WTC11 (cell line): ENCODE measurements at regions of chr3 and their contacts with region 1.

Region 1: DNA sequence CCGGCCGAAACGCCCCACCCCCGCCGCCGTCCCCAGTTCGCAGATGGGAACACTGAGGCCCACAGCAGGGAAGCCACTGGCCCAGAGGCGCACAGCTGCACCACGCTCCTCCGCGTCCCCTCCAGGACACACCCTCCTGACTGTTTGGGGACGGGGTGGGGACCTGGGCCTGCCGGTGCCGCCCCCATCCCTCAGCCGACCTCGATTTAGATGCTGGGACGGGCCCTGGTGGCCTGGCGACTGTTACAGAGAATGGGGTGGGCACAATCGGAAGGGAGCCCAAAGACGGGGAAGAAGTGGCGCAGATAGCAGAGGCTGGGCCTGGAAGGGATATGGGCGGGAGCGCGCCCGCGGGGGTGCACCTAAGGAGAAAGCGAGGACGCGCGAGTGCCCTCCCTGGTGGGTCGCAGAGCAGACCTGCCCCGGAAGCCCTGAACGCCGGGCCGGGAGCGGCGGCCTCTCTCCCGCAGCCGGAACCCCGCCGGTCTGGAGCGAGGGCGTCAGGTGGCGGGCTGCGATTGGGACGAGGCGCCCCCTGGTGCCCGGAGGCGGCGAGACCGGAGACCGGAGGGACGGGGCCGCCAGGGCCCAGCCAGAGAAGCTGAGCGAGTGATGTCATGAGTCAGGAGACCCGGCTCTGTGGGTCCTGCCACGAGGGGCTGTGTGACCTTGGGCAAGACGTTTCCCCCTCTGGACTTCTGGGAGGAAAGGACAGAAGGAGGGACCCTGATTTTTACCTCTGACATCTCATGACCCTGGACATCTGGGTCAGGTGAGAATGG is 78.4 kb downstream of the IQSEC1 start:
- DNase-seq: peak; percentile 90
- ATAC-seq: peak; percentile 71
- H3K4me3 Mint-ChIP-seq: peak overlapping the region; percentile 79
- H3K27ac Mint-ChIP-seq: peak overlapping the region; percentile 79
- H3K4me1 Mint-ChIP-seq: peaks cover 14% of the 10 kb centered on the region
- H3K27me3 Mint-ChIP-seq: peaks cover 6% of the 10 kb centered on the region
- CTCF ChIP-seq: peak; percentile 83

Region 2: DNA sequence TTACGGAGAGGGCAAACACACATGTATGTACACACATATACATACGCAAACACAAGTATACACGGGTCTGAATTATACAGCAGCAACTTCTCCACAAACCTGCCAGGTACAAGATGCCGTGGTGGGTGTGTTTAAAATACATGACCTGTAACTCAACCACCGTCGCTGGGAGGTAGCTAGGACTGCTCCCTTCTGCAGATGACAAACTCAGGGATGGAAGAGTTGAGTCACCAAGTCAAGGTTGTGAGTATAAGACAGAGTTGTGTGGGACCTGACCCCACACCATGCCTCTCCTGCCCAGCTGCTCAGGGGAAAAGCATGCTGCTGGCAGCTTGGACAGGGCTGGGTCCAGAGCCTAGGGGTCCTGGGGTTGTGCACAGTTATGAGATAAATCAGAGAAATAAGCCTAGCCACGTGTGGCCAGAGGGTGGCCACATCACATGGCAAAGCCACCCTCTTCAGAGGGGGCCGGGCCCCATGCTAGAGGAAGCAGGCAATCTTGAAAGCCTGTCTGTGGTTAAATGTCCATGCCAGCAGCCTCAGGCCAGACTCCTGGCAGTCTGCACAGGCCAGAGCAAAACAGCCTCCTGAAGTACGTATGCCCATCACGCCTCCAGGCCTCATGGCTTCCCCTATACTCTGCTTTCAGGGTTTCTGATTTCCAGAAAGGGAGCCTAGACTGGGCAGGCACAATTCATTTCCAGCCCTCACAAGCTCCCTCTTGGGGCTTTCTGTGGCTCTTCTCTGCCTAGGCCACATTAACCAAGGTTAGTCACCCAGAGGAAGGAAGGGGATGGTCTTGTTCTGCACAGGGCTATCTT is 45.7 kb before region 1 on chr3:
- CTCF ChIA-PET with region 1: interaction called, 12 read pairs
- POLR2A ChIA-PET with region 1: no interaction called
- DNase-seq: no peak
- ATAC-seq: peak; percentile 15; the same call in 1 of the 2 replicates
- H3K4me3 Mint-ChIP-seq: no peak overlapping the region
- H3K27ac Mint-ChIP-seq: no peak overlapping the region
- H3K4me1 Mint-ChIP-seq: peaks cover 12% of the 10 kb centered on the region
- H3K27me3 Mint-ChIP-seq: no peaks in the 10 kb centered on the region
- CTCF ChIP-seq: no peak

Region 3: GRCh38 chr3:12967606-12968351 is 27.0 kb before region 1 on chr3:
- CTCF ChIA-PET with region 1: interaction called, 27 read pairs
- POLR2A ChIA-PET with region 1: no interaction called
- DNase-seq: peak; percentile 84
- ATAC-seq: peak; percentile 92
- H3K4me3 Mint-ChIP-seq: peak overlapping the region; percentile 64
- H3K27ac Mint-ChIP-seq: 0 out of 2 replicates have a peak overlapping the region, but pooled peaks have one; percentile 15
- H3K4me1 Mint-ChIP-seq: peaks cover 31% of the 10 kb centered on the region
- H3K27me3 Mint-ChIP-seq: peaks cover 25% of the 10 kb centered on the region
- CTCF ChIP-seq: no peak

Region 4: GRCh38 chr3:13012228-13012691 is 17.5 kb after region 1 on chr3:
- CTCF ChIA-PET with region 1: interaction called, 14 read pairs
- POLR2A ChIA-PET with region 1: no interaction called
- DNase-seq: no peak
- ATAC-seq: no peak
- H3K4me3 Mint-ChIP-seq: no peak overlapping the region
- H3K27ac Mint-ChIP-seq: no peak overlapping the region; the same call in 1 of the 2 replicates
- H3K4me1 Mint-ChIP-seq: peaks cover 29% of the 10 kb centered on the region
- H3K27me3 Mint-ChIP-seq: no peaks in the 10 kb centered on the region
- CTCF ChIP-seq: no peak